Dendritic cell treated with granulocyte-macrophage colony-stimulating factor and Interleukin-4, amounts not matched to agents 40 ng/mL and 50 ng/mL, for 4 days (primary cell): ENCODE measurements at regions of chr1 and their contacts with region 1.

Region 1: GRCh38 chr1:39933956-39934941 is 20.7 kb upstream of the MFSD2A start:
- H3K4me3 Mint-ChIP-seq: no peak overlapping the region
- H3K27ac Mint-ChIP-seq: peak overlapping the region; percentile 69
- H3K4me1 Mint-ChIP-seq: peaks cover 76% of the 10 kb centered on the region
- H3K27me3 Mint-ChIP-seq: peaks cover 1% of the 10 kb centered on the region

Region 2: GRCh38 chr1:39954816-39955546 is 20.7 kb after region 1 on chr1 and contains the start of gene MFSD2A:
- intact Hi-C with region 1: loop called (anchors 2 kb)
- H3K4me3 Mint-ChIP-seq: peak within 1 kb of the TSS; percentile 83
- H3K27ac Mint-ChIP-seq: peak within 1 kb of the TSS; percentile 73
- H3K4me1 Mint-ChIP-seq: peaks cover 71% of the 10 kb centered on the region
- H3K27me3 Mint-ChIP-seq: peaks cover 2% of the 10 kb centered on the region

Region 3: DNA sequence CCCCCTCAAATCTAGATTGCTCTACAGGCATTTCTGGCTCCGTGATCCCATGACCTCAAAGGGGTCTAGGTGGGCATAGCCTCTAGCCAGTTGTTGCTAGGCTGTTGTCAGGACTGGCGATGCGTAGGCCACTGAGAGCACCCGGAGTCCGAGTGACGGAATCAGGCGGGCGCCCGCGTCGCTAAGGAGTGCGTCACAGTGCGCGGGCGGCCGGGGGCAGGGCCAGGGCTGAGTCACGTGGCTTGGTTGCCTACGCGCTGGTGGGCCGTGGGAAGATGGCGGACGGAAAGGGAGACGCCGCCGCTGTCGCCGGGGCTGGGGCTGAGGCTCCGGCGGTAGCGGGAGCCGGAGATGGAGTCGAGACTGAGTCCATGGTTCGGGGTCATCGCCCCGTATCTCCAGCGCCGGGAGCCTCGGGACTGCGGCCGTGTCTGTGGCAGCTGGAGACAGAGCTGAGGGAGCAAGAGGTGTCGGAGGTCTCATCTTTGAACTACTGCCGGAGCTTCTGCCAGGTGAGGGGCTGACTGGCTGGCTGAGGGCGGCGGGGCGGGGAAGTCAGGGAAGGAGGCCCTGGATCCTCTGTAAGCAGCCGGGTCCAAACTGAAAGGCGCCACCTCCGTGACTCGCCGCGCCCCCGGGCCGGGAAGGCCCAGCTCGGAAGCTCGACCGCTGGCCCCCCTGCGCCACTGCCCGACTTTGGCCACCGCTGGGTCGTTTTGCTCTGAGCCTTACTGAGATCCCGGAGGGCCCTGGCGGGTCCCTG is 227.1 kb after region 1 on chr1 and contains the start of gene RLF:
- intact Hi-C with region 1: no loop called
- H3K4me3 Mint-ChIP-seq: no peak within 1 kb of the TSS
- H3K27ac Mint-ChIP-seq: no peak within 1 kb of the TSS
- H3K4me1 Mint-ChIP-seq: peaks cover 11% of the 10 kb centered on the region
- H3K27me3 Mint-ChIP-seq: peaks cover 2% of the 10 kb centered on the region